PC-9 (cell line): ENCODE measurements at regions of chr3 and their contacts with region 1.

Region 1: GRCh38 chr3:53721187-53722119 is 124.8 kb downstream of the CHDH start:
- DNase-seq: no peak
- H3K4me3 ChIP-seq: no peak overlapping the region
- H3K27ac ChIP-seq: no peak overlapping the region
- H3K4me1 ChIP-seq: no peaks in the 10 kb centered on the region
- H3K27me3 ChIP-seq: peaks cover 78% of the 10 kb centered on the region
- CTCF ChIP-seq: no peak

Region 2: DNA sequence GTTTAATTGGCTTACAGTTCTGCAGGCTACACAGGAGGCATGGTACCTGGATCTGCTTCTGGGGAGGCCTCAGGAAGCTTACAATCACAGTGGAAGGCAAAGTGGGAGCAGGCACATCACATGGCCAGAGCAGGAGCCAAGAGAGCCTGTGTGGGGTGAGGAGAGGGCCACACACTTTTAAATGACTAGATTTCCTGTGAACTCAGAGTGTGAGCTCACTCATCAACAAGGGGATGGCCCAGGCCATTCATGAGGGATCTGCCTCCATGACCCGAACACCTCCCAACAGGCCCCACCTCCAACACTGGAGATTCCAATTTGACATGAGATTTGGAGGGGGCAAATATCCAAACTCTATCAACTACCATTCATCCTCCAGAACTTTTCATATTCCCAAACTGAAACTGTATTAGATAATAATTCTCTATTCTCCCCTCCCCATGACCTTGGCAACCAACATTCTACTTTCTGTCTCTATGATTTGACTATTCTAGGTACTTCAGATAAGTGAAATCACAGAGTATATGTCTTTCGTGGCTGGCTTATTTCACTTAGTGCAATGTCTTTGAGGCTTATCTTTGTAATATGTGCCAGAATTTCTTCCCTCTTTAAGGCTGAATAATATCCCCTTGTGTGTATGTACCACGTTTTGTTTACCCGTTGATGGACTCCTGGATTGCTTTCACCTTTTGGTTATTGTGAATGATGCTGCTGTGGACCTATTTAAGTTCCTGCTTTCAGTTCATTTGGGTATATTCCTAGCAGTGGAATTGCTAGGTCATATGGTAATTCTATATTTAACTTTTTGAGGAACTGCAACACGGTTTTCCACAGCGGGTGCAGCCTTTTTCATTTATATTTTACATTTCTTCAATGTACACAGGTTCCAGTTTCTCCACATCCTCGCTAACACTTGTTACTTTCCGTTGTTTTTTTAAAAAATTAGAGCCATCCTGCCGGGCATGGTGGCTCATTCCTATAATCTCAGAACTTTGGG is 509.4 kb before region 1 on chr3:
- CTCF ChIA-PET with region 1: no interaction called
- POLR2A ChIA-PET with region 1: interaction called, 11 read pairs
- intact Hi-C with region 1: no loop called
- DNase-seq: no peak
- H3K4me3 ChIP-seq: no peak overlapping the region
- H3K27ac ChIP-seq: no peak overlapping the region
- H3K4me1 ChIP-seq: no peaks in the 10 kb centered on the region
- H3K27me3 ChIP-seq: no peaks in the 10 kb centered on the region
- CTCF ChIP-seq: no peak